Heart right ventricle (tissue), 16 donors: ENCODE measurements at regions of chr6 and their contacts with region 1.

Region 1: DNA sequence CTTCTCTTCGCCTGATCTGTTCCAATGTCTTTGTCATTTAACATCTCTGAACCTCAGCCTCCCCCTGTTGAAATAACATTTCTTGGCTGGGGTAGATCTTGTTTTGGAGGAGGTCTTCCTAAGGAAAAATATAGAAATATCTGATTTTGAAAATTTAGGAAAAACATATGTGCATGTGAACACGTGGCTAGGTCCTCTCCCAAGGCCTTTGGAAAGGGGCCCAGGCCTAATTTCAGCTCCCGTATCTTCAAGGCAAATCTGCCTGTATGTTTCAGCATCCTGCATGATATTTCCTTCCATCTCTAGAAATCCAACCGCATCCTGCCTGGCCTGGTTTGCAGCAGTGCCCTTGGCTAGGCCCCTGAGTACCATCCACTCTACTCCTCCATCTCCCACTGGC is 261.2 kb downstream of the PHACTR1 start:
- DNase-seq: no peak
- ATAC-seq: peak in 2 of 8 donors; percentile 9 to 14
- H3K4me3 ChIP-seq: no peak overlapping the region
- H3K27ac ChIP-seq: peak overlapping the region in 1 of 10 donors; percentile 3
- H3K4me1 ChIP-seq: peaks cover 0 to 22% (median 6%) of the 10 kb centered on the region in 9 donors
- H3K27me3 ChIP-seq: no peaks in the 10 kb centered on the region
- CTCF ChIP-seq: no peak

Region 2: GRCh38 chr6:12693122-12693521 is 284.7 kb before region 1 on chr6:
- intact Hi-C with region 1: no loop called
- DNase-seq: no peak
- ATAC-seq: no peak
- H3K4me3 ChIP-seq: no peak overlapping the region
- H3K27ac ChIP-seq: no peak overlapping the region
- H3K4me1 ChIP-seq: no peaks in the 10 kb centered on the region
- H3K27me3 ChIP-seq: peaks cover 0 to 8% (median 0%) of the 10 kb centered on the region in 7 donors
- CTCF ChIP-seq: no peak

Region 3: DNA sequence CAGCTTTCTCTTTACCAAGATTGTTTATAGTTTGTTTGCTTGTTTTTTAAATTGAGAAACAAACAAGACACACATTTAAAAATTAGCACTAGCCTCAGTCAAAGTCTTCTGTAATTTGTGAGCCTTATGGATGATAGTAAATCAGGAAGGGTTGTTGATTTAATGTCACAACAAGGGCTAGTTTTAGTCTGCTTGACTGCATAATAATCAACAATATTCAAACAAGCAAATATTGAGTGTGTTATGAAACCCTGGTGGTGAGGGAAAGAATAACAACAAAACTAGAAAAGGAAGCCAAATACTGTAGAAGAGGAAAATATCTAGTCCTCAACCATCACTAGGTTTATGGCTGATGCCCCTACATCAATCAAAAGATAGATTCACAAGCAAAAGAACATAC is 122.0 kb after region 1 on chr6:
- intact Hi-C with region 1: no loop called
- DNase-seq: no peak
- ATAC-seq: no peak
- H3K4me3 ChIP-seq: no peak overlapping the region
- H3K27ac ChIP-seq: no peak overlapping the region
- H3K4me1 ChIP-seq: peaks cover 0 to 55% (median 23%) of the 10 kb centered on the region in 9 donors
- H3K27me3 ChIP-seq: no peaks in the 10 kb centered on the region
- CTCF ChIP-seq: peak in 2 of 9 donors; percentile 12 to 17

Region 4: DNA sequence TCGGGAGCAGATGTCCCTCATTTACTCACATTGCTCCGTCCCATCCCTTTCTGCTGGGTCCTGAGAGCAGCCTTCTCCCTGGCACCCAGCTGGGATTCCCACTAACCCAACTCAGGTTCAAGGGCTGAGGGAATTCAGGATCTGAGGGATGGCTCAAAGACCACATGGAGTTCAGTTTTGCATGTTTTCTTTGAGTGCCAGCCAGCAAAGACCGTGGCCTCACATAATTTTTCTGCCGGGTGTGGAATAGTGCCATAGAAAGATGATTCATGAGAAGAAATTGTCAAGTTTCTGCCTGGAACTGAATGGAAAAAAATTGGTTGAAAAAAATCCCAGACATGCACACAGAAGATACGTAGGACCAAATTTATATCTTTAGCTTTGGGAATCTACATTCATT is 1308.3 kb after region 1 on chr6:
- intact Hi-C with region 1: loop called in 1 of 10 experiments (anchors 5 kb)
- DNase-seq: peak in 1 of 2 donors; percentile 34
- ATAC-seq: peak in 7 of 8 donors; percentile 12 to 68 (median 45)
- H3K4me3 ChIP-seq: no peak overlapping the region
- H3K27ac ChIP-seq: peak overlapping the region in 1 of 10 donors; percentile 51
- H3K4me1 ChIP-seq: peaks cover 0 to 13% (median 0%) of the 10 kb centered on the region in 9 donors
- H3K27me3 ChIP-seq: no peaks in the 10 kb centered on the region
- CTCF ChIP-seq: no peak